GM12878 (cell line): ENCODE measurements at regions of chr9 and their contacts with region 1.

Region 1: GRCh38 chr9:90142580-90142979 is 500.0 kb downstream of the DIRAS2 start:
- DNase-seq: no peak
- ATAC-seq: no peak; the same call in 2 of the 3 replicates
- H3K4me3 ChIP-seq: no peak overlapping the region
- H3K27ac ChIP-seq: no peak overlapping the region
- H3K4me1 ChIP-seq: no peaks in the 10 kb centered on the region
- H3K27me3 ChIP-seq: no peaks in the 10 kb centered on the region; a peak in 2 of 4 replicates
- CTCF ChIP-seq: peak; percentile 43 to 51 (median 48); a peak in 5 of 6 replicates
- EP300 ChIP-seq: no peak
- POLR2A ChIP-seq: no peak
- RAD21 ChIP-seq: peak; percentile 57

Region 2: DNA sequence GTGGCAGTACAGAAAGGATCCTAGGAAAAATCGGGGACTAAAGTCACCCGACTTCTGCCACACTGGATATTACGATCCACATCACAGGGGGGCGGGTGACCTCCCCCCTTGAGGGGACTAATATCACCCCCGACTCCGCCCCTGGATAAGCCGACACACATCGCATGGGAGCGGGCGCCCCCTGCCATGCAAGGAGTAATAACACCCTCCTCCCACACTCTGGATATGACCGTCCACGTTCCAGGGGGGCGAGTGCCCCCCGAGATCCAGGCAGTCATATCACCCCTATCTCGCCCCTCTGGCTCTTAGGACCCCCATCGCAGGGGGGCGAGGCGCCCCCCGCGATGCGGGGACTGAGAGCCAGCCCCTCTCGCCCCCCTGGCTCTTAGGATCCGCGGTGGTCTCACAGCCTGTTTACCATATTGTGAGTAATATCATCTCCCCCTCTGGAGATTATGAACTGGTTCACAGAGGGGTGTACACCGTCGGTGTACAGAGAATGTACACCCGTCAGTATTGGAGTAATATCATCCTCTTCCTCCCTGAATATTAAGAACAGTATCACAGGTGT is 77.1 kb after region 1 on chr9:
- CTCF ChIA-PET with region 1: no interaction called
- POLR2A ChIA-PET with region 1: no interaction called
- RAD21 ChIA-PET with region 1: no interaction called
- SMC1A ChIA-PET with region 1: no interaction called
- in situ Hi-C with region 1: no loop called
- intact Hi-C with region 1: loop called (anchors 1 kb)
- DNase-seq: no peak
- ATAC-seq: peak; percentile 61
- H3K4me3 ChIP-seq: no peak overlapping the region
- H3K27ac ChIP-seq: no peak overlapping the region
- H3K4me1 ChIP-seq: no peaks in the 10 kb centered on the region
- H3K27me3 ChIP-seq: no peaks in the 10 kb centered on the region
- CTCF ChIP-seq: peak; percentile 47 to 66 (median 47); a peak in 5 of 6 replicates
- EP300 ChIP-seq: no peak
- POLR2A ChIP-seq: no peak
- RAD21 ChIP-seq: peak; percentile 65

Region 3: GRCh38 chr9:90767523-90768100 is 625.0 kb after region 1 on chr9:
- CTCF ChIA-PET with region 1: no interaction called
- POLR2A ChIA-PET with region 1: no interaction called
- RAD21 ChIA-PET with region 1: no interaction called
- SMC1A ChIA-PET with region 1: no interaction called
- in situ Hi-C with region 1: loop called (anchors 10 kb)
- intact Hi-C with region 1: no loop called
- DNase-seq: no peak
- ATAC-seq: no peak
- H3K4me3 ChIP-seq: no peak overlapping the region
- H3K27ac ChIP-seq: no peak overlapping the region
- H3K4me1 ChIP-seq: peaks cover 20% of the 10 kb centered on the region
- H3K27me3 ChIP-seq: no peaks in the 10 kb centered on the region
- CTCF ChIP-seq: no peak
- EP300 ChIP-seq: no peak
- POLR2A ChIP-seq: no peak
- RAD21 ChIP-seq: no peak

Region 4: GRCh38 chr9:90860826-90861225 is 718.2 kb after region 1 on chr9:
- CTCF ChIA-PET with region 1: no interaction called
- POLR2A ChIA-PET with region 1: no interaction called
- RAD21 ChIA-PET with region 1: no interaction called
- SMC1A ChIA-PET with region 1: no interaction called
- in situ Hi-C with region 1: loop called (anchors 10 kb)
- intact Hi-C with region 1: no loop called
- DNase-seq: no peak
- ATAC-seq: no peak
- H3K4me3 ChIP-seq: no peak overlapping the region
- H3K27ac ChIP-seq: no peak overlapping the region
- H3K4me1 ChIP-seq: no peaks in the 10 kb centered on the region
- H3K27me3 ChIP-seq: no peaks in the 10 kb centered on the region
- CTCF ChIP-seq: no peak
- EP300 ChIP-seq: no peak
- POLR2A ChIP-seq: no peak
- RAD21 ChIP-seq: no peak

Region 5: DNA sequence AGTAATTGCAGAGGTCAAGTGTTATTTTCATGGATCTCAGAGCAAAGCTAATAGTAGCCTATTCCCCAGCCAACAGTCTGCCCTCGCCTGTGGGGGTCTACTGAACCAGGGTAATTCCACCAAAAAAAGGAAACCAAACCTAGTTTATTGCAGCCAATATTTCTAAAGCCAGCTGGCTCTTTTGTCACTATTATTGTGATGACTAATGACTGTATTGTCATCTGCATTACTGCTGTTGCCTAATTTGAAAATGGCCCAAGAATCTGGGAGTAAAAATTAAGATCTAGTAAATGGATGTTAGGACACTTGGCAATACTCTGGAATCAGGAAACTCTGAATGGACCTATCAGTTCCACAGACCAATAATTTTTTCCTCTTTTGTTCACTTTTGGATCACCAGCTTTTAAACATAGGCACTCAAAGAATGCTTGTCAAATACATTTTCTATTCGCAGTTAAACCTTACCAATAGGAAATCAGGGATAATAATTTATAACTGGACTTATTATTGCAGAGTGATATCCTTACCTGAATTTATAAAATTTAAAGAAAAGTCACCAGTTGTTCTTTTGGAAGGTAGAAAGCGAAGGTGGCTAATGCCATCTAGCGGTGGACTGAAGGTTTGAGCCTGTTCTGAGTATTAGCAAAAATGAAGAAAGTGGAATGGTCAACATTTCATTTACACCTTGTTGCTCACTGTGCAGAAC is 728.2 kb after region 1 on chr9:
- CTCF ChIA-PET with region 1: interaction called, 3 read pairs
- POLR2A ChIA-PET with region 1: no interaction called
- RAD21 ChIA-PET with region 1: no interaction called
- SMC1A ChIA-PET with region 1: interaction called, 5 read pairs
- in situ Hi-C with region 1: loop called (anchors 10 kb)
- intact Hi-C with region 1: loop called (anchors 5 kb)
- DNase-seq: peak; percentile 17
- ATAC-seq: peak; percentile 81
- H3K4me3 ChIP-seq: no peak overlapping the region
- H3K27ac ChIP-seq: no peak overlapping the region
- H3K4me1 ChIP-seq: no peaks in the 10 kb centered on the region
- H3K27me3 ChIP-seq: no peaks in the 10 kb centered on the region
- CTCF ChIP-seq: peak; percentile 84 to 89 (median 85)
- EP300 ChIP-seq: no peak
- POLR2A ChIP-seq: no peak
- RAD21 ChIP-seq: peak; percentile 95